H1 (cell line): ENCODE measurements at regions of chr13 and their contacts with region 1.

Region 1: GRCh38 chr13:101115762-101116171 is 300.5 kb downstream of the NALCN start:
- DNase-seq: no peak
- H3K4me3 ChIP-seq: no peak overlapping the region
- H3K27ac ChIP-seq: no peak overlapping the region
- H3K4me1 ChIP-seq: peaks cover 15 to 26% (median 18%) of the 10 kb centered on the region in 4 experiments; a peak in 6 of 7 replicates
- H3K27me3 ChIP-seq: no peaks in the 10 kb centered on the region
- CTCF ChIP-seq: peak in 2 of 3 experiments; percentile 32 to 39; a peak in 2 of 4 replicates
- EP300 ChIP-seq: no peak
- POLR2A ChIP-seq: no peak
- RAD21 ChIP-seq: peak; percentile 31 to 39; a peak in 3 of 4 replicates

Region 2: DNA sequence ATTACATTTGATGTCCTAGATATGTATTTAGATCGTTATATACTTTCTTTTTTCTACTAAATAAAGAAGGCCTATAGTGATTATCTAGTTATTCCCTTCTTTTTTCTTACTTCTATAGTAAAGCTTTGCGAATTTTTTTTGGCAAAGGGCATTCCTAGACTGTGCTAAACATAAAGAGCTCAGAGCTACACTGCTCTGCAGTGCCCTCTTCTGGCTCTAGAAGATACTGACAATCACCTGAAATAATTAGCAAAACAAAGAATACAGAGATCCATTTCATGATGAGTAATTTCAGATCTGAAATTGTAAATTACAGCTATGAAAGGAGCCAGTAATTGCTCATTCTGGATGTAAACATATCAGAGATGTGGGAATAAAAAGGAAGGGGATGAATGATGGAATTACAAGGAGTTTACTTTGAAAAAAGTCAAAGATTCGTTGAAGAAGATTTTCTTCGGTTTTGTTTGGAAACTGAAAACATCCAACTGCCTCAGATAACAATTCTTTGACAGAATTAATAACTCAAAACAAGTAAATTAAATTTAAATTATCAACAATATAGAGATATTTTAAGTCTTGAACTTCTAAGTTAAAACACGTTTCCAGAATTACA is 12.1 kb after region 1 on chr13:
- CTCF ChIA-PET with region 1: interaction called, 27 read pairs
- POLR2A ChIA-PET with region 1: no interaction called
- DNase-seq: no peak
- H3K4me3 ChIP-seq: no peak overlapping the region
- H3K27ac ChIP-seq: no peak overlapping the region
- H3K4me1 ChIP-seq: no peaks in the 10 kb centered on the region
- H3K27me3 ChIP-seq: no peaks in the 10 kb centered on the region
- CTCF ChIP-seq: peak in 2 of 3 experiments; percentile 53 to 67; a peak in 2 of 4 replicates
- EP300 ChIP-seq: no peak
- POLR2A ChIP-seq: no peak
- RAD21 ChIP-seq: peak; percentile 71 to 74